ENCODE measurements at regions of chr16 and their contacts with region 1.

Region 1: DNA sequence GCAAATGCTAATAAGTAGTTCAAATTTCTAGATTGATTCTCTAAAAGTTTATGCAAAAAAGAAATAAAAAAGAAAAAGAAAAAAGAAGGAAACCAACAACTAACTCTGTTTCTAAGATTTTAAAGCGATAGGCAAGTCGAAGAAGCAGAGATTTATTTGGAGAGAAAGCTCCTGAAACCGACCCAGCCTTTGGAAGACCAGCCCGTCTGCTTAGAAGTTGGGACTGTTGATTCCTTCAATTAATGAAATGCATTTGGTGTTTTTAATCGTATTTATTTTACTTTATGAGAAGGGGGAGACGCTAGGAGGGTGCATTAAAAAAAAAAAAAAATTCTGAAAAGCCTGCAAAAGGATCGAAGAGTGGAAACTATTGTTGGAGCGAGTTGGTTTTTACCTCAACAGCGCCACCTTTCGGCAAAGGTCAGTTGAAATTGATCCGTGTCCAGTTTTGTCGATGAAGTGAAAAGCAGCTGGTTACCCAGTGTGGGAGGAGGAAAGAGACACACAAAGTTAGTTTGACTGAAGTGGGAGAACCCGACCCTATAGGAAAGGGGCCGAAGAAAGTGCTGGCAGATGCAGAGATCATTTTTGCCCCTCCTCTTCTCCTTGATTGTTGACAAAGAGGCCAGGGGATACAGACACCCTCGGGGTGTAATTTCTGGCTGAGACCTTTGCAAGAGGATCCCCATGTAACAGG is 1.5 kb upstream of the MAF start:
- DNase-seq: peak; percentile 70
- CTCF ChIP-seq: peak; percentile 67

Region 2: DNA sequence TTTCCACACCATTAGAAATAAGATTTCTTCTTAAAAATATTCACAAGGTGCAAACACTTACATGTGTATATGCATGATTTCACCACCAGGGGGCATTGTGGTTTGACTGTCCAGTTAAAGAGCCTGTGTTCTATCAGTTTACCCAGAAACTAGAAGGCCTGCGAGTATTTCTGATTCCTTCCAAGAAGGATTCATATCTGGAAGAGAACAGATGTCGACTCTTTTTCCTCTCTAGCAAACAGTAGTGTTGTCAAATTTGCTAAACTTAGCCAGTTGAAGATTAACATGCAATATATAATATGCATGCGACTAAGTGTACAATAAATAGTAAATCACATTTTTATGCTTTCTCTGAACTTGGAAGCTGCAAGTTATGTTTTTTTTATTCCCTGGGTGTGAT is 1098.5 kb before region 1 on chr16:
- in situ Hi-C with region 1: loop called (anchors 25 kb)
- DNase-seq: peak; percentile 38
- CTCF ChIP-seq: peak; percentile 58

Region 3: GRCh38 chr16:78684040-78684611 is 918.0 kb before region 1 on chr16:
- in situ Hi-C with region 1: loop called (anchors 25 kb)
- DNase-seq: no peak
- CTCF ChIP-seq: no peak

Region 4: DNA sequence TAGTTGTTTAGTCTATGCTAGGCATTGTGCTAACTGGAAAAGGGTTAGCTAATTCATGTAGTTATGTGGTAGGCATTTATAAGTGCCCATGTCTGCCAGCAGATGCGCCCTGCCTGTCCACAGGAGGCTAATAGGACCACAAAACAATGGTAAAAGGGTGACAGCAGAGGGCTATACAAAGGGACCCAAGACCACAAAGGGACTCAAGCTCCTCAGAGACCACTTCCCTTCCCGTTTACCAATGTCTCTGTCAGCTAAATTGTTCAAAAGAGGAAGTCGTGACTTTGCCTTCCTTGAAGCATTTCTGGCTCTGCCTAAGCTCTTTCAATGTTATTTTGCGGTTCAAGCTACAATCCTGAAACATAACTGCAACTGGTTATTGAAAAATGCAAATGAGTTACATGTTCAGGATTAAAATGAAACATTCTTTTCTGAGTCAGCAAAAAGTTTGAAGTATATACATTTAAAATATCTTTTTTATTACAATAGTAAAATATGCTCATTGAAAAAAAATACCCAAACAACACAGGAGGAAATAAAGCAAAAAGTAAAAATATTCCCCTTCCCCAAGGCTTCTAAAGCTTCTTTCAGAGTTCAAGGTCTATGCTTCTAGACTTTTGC is 150.8 kb before region 1 on chr16:
- in situ Hi-C with region 1: no loop called
- DNase-seq: no peak
- CTCF ChIP-seq: no peak